ENCODE measurements at regions of chr1 and their contacts with region 1.

Region 1: GRCh38 chr1:183646776-183647175 is 6.3 kb downstream of the APOBEC4 start:
- DNase-seq: no peak
- ATAC-seq: no peak
- H3K4me3 ChIP-seq: no peak overlapping the region
- H3K27ac ChIP-seq: no peak overlapping the region
- H3K4me1 ChIP-seq: no peaks in the 10 kb centered on the region
- H3K27me3 ChIP-seq: no peaks in the 10 kb centered on the region
- CTCF ChIP-seq: no peak

Region 2: GRCh38 chr1:183757061-183757460 is 110.3 kb after region 1 on chr1:
- intact Hi-C with region 1: no loop called
- DNase-seq: no peak
- ATAC-seq: no peak
- H3K4me3 ChIP-seq: no peak overlapping the region
- H3K27ac ChIP-seq: no peak overlapping the region
- H3K4me1 ChIP-seq: no peaks in the 10 kb centered on the region
- H3K27me3 ChIP-seq: no peaks in the 10 kb centered on the region
- CTCF ChIP-seq: no peak

Region 3: DNA sequence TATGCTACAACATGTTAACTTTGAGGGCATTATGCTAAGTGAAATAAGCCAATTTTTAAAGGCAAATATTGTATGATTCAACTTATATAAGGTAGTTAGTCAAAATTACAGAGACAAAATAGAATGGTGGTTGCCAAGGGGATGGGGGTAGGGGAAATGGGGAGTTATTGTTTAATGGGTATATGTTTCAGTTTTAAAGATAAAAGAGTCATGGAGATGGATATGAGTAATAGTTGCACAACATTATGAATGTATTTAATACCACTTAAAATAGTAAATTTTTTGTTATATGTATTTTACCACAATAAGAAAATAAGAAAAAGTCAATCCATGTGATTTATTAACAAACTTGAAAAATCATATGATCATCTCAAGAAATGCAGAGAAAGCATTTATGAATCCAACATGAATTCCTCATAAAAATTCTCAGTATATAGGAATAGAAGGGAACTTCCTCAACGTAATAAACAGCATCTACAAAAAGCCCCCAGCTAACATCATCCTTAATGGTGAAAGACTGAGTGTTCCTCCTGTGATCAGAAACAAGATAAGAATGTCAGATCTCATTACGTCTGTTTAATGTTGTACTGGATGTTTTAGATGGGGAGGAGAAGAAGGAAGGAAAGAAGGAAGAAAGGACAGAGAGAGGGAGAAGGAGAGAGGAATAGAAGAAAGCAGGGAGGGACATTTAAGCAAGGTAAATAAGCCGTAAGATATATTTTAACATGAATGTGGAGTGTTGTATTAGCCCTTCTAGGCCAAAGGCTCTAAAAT is 398.0 kb after region 1 on chr1:
- intact Hi-C with region 1: loop called in 1 of 2 experiments (anchors 10 kb)
- DNase-seq: no peak
- ATAC-seq: no peak
- H3K4me3 ChIP-seq: no peak overlapping the region
- H3K27ac ChIP-seq: no peak overlapping the region
- H3K4me1 ChIP-seq: no peaks in the 10 kb centered on the region
- H3K27me3 ChIP-seq: peaks cover 0 to 3% (median 0%) of the 10 kb centered on the region in 3 donors
- CTCF ChIP-seq: no peak

Measured in psoas muscle (tissue), 8 donors.